GM13976 (cell line): ENCODE measurements at regions of chr12 and their contacts with region 1.

Region 1: GRCh38 chr12:13362260-13362841 is 165.8 kb downstream of the EMP1 start:
- DNase-seq: peak; percentile 58
- CTCF ChIP-seq: peak; percentile 80

Region 2: DNA sequence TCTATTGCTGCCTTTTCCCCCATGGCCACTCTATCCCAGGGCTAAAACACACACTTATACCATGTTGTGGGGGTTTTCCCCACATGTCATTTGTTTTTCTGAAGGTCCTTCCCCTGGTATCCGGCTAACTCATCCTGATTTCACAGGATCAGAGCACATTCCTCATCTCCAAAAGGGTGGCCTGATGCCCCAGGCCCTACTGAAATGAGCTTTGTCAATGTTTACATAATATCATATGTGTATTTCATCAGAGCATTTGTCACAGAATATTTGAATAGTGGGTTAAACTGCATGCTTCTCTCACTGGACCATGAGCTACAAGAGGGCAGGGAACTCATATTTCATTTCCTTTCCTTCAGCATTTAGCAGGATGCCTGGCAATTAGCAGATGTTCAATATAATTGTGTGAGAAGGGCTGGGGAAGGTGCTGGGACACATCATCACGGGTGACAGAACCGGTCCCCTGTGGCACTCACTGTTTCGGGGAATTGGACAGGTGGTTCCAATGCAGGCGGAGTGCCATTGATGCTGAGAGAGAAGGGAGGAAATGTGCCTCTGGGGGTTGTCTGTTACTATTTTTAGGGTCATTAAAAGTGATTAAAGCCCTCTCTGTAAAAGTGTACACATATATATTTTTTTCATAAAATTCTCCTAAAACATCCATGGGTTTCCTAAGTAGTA is 139.0 kb before region 1 on chr12:
- in situ Hi-C with region 1: no loop called
- DNase-seq: no peak
- CTCF ChIP-seq: no peak

Region 3: GRCh38 chr12:13652105-13652504 is 289.8 kb after region 1 on chr12:
- in situ Hi-C with region 1: loop called (anchors 10 kb)
- DNase-seq: no peak
- CTCF ChIP-seq: no peak

Region 4: DNA sequence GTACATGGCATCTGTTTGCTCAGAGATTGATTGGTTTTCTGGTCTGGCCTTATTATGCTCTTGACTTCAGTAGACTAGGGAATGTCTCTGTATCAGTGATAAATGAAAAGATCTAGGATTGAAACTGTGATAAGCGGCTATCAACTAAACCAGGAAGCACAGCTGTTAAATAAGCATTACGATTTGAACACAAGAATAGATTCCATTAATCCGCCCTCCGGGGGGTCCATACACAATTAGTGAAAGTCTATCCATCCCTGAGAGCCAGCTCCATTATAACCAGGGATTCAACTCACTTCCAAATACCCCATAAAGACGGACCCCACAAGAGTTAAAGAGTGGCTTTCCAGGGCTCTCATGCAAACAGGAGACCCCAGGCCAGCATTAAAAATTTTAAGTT is 340.0 kb after region 1 on chr12:
- in situ Hi-C with region 1: no loop called
- DNase-seq: no peak
- CTCF ChIP-seq: no peak